Psoas muscle (tissue), 8 donors: ENCODE measurements at regions of chr1 and their contacts with region 1.

Region 1: GRCh38 chr1:231681006-231681405 is 54.4 kb downstream of the DISC1 start:
- DNase-seq: no peak
- ATAC-seq: no peak
- H3K4me3 ChIP-seq: no peak overlapping the region
- H3K27ac ChIP-seq: no peak overlapping the region
- H3K4me1 ChIP-seq: peaks cover 15% of the 10 kb centered on the region
- H3K27me3 ChIP-seq: no peaks in the 10 kb centered on the region
- CTCF ChIP-seq: no peak

Region 2: DNA sequence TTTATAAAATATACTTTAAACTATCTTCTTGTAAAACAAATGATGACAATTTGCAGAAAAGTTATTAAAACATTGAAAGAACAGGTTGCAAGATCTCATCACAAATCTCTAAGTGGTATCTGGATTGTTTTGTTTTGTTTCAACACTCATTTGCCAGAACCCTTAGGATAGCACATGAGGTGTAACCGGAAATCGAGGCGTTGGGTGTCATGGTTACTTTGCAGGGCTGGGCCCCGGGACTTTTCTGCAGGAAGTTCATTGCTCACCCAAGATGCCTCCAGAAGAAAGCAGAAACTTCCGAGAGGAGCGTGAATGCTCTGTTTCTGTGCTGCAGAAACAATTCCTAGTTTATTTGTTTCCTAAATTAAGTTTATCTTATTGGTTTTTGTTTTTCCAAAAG is 51.9 kb before region 1 on chr1:
- intact Hi-C with region 1: loop called in 1 of 2 experiments (anchors 2 kb)
- DNase-seq: peak in 1 of 2 donors; percentile 43
- ATAC-seq: no peak
- H3K4me3 ChIP-seq: no peak overlapping the region
- H3K27ac ChIP-seq: no peak overlapping the region
- H3K4me1 ChIP-seq: no peaks in the 10 kb centered on the region
- H3K27me3 ChIP-seq: peaks cover 0 to 20% (median 1%) of the 10 kb centered on the region in 3 donors
- CTCF ChIP-seq: no peak